Natural killer cell (primary cell): ENCODE measurements at regions of chr5 and their contacts with region 1.

Region 1: GRCh38 chr5:52776116-52776515 is 11.6 kb upstream of the ITGA1 start:
- DNase-seq: peak; percentile 50 to 64
- ATAC-seq: peak; percentile 84 to 93 (median 90)
- H3K4me3 ChIP-seq: no peak overlapping the region
- H3K4me3 Mint-ChIP-seq: peak overlapping the region; percentile 43
- H3K27ac ChIP-seq: no peak overlapping the region
- H3K27ac Mint-ChIP-seq: peak overlapping the region in 1 of 2 donors; percentile 74
- H3K4me1 ChIP-seq: peaks cover 12% of the 10 kb centered on the region
- H3K4me1 Mint-ChIP-seq: peaks cover 34 to 43% of the 10 kb centered on the region in 2 donors
- H3K27me3 ChIP-seq: no peaks in the 10 kb centered on the region
- H3K27me3 Mint-ChIP-seq: peaks cover 9 to 39% of the 10 kb centered on the region in 2 donors
- CTCF ChIP-seq: no peak

Region 2: DNA sequence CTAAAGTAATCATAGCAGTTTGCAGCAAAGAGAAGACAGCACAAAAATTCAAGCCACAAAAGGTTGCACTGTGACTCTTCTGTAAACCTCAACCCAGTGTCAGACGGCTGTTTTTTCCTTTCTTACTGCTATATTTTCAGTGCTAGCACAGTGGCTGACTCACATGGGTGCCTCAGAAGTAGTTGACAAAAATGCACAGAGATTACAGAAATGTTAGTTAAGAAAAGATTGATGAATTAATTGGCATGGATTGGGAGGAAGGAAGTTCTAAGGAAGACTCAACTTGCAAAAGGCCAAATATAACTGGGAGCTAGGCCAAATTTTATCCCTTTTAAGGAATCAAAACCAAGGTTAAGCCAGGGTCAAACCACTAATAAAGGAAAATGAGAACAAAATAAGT is 32.1 kb before region 1 on chr5:
- intact Hi-C with region 1: loop called (anchors 5 kb)
- DNase-seq: peak in 1 of 2 donors; percentile 69
- ATAC-seq: peak; percentile 74 to 89 (median 79)
- H3K4me3 ChIP-seq: no peak overlapping the region
- H3K4me3 Mint-ChIP-seq: no peak overlapping the region
- H3K27ac ChIP-seq: peak overlapping the region; percentile 11
- H3K27ac Mint-ChIP-seq: peak overlapping the region in 1 of 2 donors; percentile 72
- H3K4me1 ChIP-seq: peaks cover 6% of the 10 kb centered on the region
- H3K4me1 Mint-ChIP-seq: peaks cover 13 to 44% of the 10 kb centered on the region in 2 donors
- H3K27me3 ChIP-seq: no peaks in the 10 kb centered on the region
- H3K27me3 Mint-ChIP-seq: peaks cover 6 to 7% of the 10 kb centered on the region in 2 donors
- CTCF ChIP-seq: no peak